ENCODE measurements at regions of chr15 and their contacts with region 1.

Region 1: DNA sequence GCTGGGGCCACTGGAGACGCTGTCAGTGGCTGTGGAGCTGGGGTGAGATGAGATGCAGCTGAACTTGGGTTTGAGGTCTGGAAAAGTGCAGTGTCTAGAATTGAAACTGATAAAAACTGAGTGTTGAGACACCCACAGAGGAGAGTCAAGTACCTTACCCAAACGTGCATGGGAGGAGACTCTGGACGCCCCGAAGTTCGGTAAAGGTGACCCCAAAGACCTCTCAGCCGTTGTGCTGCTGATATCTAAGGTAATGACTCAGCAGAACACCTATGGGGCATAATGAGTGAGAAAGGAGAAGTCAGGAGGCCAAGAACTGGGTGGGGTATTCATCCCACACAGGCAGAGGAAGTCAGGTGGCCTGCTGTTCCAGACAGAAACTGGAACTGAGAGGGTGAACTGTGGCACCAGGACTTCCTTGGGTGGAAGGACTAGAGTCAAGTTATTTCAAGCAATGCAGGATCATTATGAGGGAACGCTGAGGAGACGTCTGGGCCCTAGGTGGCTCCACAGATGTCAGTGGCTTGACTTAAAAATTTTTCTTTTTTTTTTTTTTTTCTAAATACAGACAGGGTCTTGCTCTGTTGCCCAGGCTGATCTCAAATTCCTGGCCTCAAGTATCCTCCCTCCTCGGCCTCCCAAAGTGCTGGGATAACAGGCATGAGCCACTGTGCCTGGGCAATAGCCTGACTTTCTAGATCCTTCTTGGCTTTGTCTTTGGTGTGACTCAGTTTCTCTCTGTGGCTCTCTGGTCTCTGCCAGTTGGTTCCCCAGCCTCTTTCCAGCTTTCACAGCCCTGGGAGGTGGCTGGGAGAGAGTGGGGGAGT is 67.6 kb upstream of the GCNT3 start:
- DNase-seq: no peak
- H3K4me3 ChIP-seq: no peak overlapping the region
- H3K27ac ChIP-seq: no peak overlapping the region
- H3K4me1 ChIP-seq: no peaks in the 10 kb centered on the region
- H3K27me3 ChIP-seq: no peaks in the 10 kb centered on the region
- CTCF ChIP-seq: no peak

Region 2: GRCh38 chr15:59905176-59905575 is 361.2 kb after region 1 on chr15:
- CTCF ChIA-PET with region 1: no interaction called
- POLR2A ChIA-PET with region 1: interaction called, 13 read pairs
- intact Hi-C with region 1: no loop called
- DNase-seq: no peak
- H3K4me3 ChIP-seq: no peak overlapping the region
- H3K27ac ChIP-seq: no peak overlapping the region
- H3K4me1 ChIP-seq: no peaks in the 10 kb centered on the region
- H3K27me3 ChIP-seq: peaks cover 65% of the 10 kb centered on the region
- CTCF ChIP-seq: no peak